ENCODE measurements at regions of chr17 and their contacts with region 1.

Region 1: GRCh38 chr17:61904094-61904710 is 23.6 kb downstream of the INTS2 start:
- DNase-seq: no peak
- ATAC-seq: no peak
- H3K4me3 ChIP-seq: no peak overlapping the region
- H3K27ac ChIP-seq: no peak overlapping the region
- H3K4me1 ChIP-seq: no peaks in the 10 kb centered on the region
- H3K27me3 ChIP-seq: no peaks in the 10 kb centered on the region
- CTCF ChIP-seq: no peak

Region 2: DNA sequence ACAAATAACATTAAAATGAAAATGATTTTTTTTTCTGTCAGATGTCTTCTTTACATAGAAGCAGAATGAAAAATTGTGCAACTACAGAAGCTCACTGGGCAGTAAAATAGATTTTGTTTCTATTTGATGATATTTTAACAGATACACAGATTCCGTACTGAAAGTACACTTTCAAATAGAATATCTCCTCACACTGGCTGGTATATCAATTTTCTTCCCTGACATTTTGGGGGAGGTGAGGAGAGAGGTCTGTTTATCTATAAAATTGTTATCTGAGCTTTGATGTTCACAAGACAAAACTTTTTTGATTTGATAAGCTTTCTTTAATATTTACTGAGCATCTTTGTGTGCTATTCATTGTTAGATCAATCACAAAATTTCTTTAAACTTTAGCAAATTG is 188.9 kb before region 1 on chr17:
- CTCF ChIA-PET with region 1: no interaction called
- POLR2A ChIA-PET with region 1: interaction called, 11 read pairs
- in situ Hi-C with region 1: no loop called
- intact Hi-C with region 1: no loop called
- DNase-seq: no peak
- ATAC-seq: no peak
- H3K4me3 ChIP-seq: no peak overlapping the region
- H3K27ac ChIP-seq: no peak overlapping the region
- H3K4me1 ChIP-seq: no peaks in the 10 kb centered on the region
- H3K27me3 ChIP-seq: no peaks in the 10 kb centered on the region
- CTCF ChIP-seq: no peak

Region 3: DNA sequence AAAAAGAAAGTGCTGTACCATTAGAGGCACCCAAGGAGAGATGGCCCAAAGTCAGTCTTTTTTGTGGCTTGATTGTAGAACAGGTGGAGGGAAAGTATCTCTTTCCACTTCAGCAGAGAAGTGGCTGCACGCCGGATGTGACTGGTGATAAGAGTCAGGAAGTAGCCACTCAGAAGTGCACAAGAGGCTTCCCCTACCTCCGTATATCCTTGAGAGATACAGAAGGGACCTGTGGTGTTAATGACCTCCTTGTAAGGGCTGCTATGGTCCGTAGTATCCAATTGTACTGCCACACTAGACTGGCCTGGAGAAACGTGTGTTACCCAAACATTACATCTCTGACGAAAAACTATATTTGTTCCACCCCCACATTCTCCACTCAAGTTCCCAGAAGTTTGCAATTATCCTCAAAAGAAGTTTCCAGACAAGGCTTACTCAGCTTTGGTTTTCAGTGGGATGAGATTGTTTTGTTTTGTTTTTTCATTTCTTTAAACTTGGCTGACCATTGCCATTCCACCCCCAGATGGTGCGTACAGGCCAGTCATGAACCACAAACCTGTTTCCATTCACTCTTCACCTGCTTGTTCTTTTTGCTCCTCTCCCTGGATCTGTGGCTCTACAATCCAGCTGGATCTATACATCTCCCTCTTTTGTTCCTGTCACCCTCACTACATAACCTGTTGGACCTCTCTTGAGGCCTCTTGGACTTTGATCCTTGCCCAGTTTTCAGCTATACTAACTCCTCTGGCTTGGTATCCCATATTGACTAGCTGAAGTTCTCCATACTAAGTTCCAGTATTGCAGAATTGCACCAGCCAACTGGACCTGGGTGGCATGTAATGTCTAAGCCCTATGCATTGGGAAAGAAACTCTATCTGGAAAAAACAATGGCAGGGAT is 181.6 kb after region 1 on chr17:
- CTCF ChIA-PET with region 1: no interaction called
- POLR2A ChIA-PET with region 1: no interaction called
- in situ Hi-C with region 1: no loop called
- intact Hi-C with region 1: no loop called
- DNase-seq: no peak
- ATAC-seq: no peak
- H3K4me3 ChIP-seq: no peak overlapping the region
- H3K27ac ChIP-seq: no peak overlapping the region
- H3K4me1 ChIP-seq: no peaks in the 10 kb centered on the region
- H3K27me3 ChIP-seq: no peaks in the 10 kb centered on the region
- CTCF ChIP-seq: no peak